Common myeloid progenitor, CD34-positive (primary cell): ENCODE measurements at regions of chr9 and their contacts with region 1.

Region 1: GRCh38 chr9:121185178-121185745 is 16.4 kb downstream of the RAB14 start:
- DNase-seq: peak in 1 of 3 donors; percentile 26
- H3K4me3 ChIP-seq: no peak overlapping the region
- H3K27ac ChIP-seq: no peak overlapping the region
- H3K4me1 ChIP-seq: peaks cover 18 to 44% (median 33%) of the 10 kb centered on the region in 4 experiments
- H3K27me3 ChIP-seq: no peaks in the 10 kb centered on the region

Region 2: GRCh38 chr9:121098567-121099198 is 86.6 kb before region 1 on chr9:
- CTCF ChIA-PET with region 1: no interaction called
- POLR2A ChIA-PET with region 1: no interaction called
- DNase-seq: no peak
- H3K4me3 ChIP-seq: no peak overlapping the region
- H3K27ac ChIP-seq: no peak overlapping the region
- H3K4me1 ChIP-seq: no peaks in the 10 kb centered on the region
- H3K27me3 ChIP-seq: no peaks in the 10 kb centered on the region

Region 3: GRCh38 chr9:121169094-121169601 is 16.1 kb before region 1 on chr9:
- CTCF ChIA-PET with region 1: interaction called, 36 read pairs
- POLR2A ChIA-PET with region 1: interaction called, 3 read pairs
- DNase-seq: peak in 2 of 3 donors; percentile 36 to 40
- H3K4me3 ChIP-seq: no peak overlapping the region
- H3K27ac ChIP-seq: no peak overlapping the region
- H3K4me1 ChIP-seq: no peaks in the 10 kb centered on the region
- H3K27me3 ChIP-seq: no peaks in the 10 kb centered on the region

Region 4: GRCh38 chr9:121201045-121201737 is 15.9 kb after region 1 on chr9:
- CTCF ChIA-PET with region 1: interaction called, 15 read pairs
- POLR2A ChIA-PET with region 1: no interaction called
- DNase-seq: peak in 2 of 3 donors; percentile 35 to 52
- H3K4me3 ChIP-seq: peak overlapping the region; percentile 80 to 98 (median 89)
- H3K27ac ChIP-seq: peak overlapping the region; percentile 82 to 91
- H3K4me1 ChIP-seq: peaks cover 26 to 49% (median 44%) of the 10 kb centered on the region in 4 experiments
- H3K27me3 ChIP-seq: no peaks in the 10 kb centered on the region

Region 5: DNA sequence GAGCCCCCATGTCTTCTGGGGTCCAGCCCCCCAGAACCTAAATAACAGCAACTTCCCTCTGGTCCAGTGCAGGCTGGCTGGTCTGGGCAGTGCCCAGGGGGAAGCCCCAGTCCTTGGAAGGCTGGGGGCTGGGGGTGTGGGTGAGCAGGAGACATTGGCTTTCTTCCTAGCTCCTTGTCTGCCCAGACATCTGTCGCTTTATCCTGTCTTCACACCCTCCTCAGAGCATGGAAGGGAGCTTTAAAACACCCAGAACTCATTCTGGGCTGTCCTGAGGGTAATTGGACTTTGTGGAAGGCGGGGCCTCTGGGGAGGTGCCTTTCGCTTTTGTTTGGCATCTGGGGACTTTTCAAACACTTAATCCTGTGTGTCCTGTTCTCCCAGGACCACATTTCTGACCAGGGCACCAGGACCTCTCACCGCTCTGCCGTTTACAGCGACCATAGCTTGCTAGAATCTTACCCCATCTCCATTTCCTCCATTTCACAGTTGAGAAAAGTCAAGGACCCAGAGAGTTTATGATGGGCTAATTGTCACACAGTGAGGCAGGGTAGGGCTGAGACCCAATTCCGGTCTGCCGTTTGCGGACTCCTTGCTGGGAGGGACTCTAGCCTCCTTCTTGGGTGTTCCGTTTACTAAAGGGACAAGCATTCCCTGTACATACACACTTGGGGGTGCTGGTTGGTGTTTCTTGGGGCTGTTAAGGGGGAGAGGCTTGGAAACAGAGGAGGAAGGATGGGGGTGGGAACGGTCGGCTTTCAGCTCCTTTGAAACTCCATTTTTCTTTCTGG is 83.8 kb after region 1 on chr9:
- CTCF ChIA-PET with region 1: no interaction called
- POLR2A ChIA-PET with region 1: no interaction called
- DNase-seq: peak in 2 of 3 donors; percentile 73 to 82
- H3K4me3 ChIP-seq: peak overlapping the region; percentile 70 to 85 (median 78)
- H3K27ac ChIP-seq: peak overlapping the region in 1 of 2 experiments; percentile 4
- H3K4me1 ChIP-seq: peaks cover 26 to 66% (median 62%) of the 10 kb centered on the region in 4 experiments
- H3K27me3 ChIP-seq: no peaks in the 10 kb centered on the region